H1 (cell line): ENCODE measurements at regions of chr19 and their contacts with region 1.

Region 1: GRCh38 chr19:10864538-10864899 is 6.8 kb upstream of the CARM1 start:
- DNase-seq: peak in 1 of 2 experiments; percentile 94
- H3K4me3 ChIP-seq: no peak overlapping the region
- H3K27ac ChIP-seq: no peak overlapping the region
- H3K4me1 ChIP-seq: no peaks in the 10 kb centered on the region; a peak in 1 of 7 replicates
- H3K27me3 ChIP-seq: no peaks in the 10 kb centered on the region; a peak in 1 of 7 replicates
- CTCF ChIP-seq: peak; percentile 87 to 96 (median 88)
- EP300 ChIP-seq: no peak
- POLR2A ChIP-seq: no peak
- RAD21 ChIP-seq: peak; percentile 58 to 59

Region 2: GRCh38 chr19:10828981-10829821 is 35.3 kb before region 1 on chr19:
- CTCF ChIA-PET with region 1: interaction called, 20 read pairs
- POLR2A ChIA-PET with region 1: no interaction called
- DNase-seq: no peak
- H3K4me3 ChIP-seq: no peak overlapping the region
- H3K27ac ChIP-seq: 0 out of 2 replicates have a peak overlapping the region, but pooled peaks have one; percentile 51
- H3K4me1 ChIP-seq: no peaks in the 10 kb centered on the region
- H3K27me3 ChIP-seq: no peaks in the 10 kb centered on the region
- CTCF ChIP-seq: peak; percentile 35 to 73 (median 38)
- EP300 ChIP-seq: no peak
- POLR2A ChIP-seq: no peak
- RAD21 ChIP-seq: peak in 1 of 2 experiments; percentile 18; a peak in 1 of 4 replicates

Region 3: GRCh38 chr19:10835754-10836477 is 28.6 kb before region 1 on chr19 and contains the start of gene TMED1:
- CTCF ChIA-PET with region 1: interaction called, 249 read pairs
- POLR2A ChIA-PET with region 1: interaction called, 21 read pairs
- DNase-seq: peak; percentile 99 to 100
- H3K4me3 ChIP-seq: peak within 1 kb of the TSS; percentile 58 to 92 (median 76)
- H3K27ac ChIP-seq: peak within 1 kb of the TSS; percentile 97
- H3K4me1 ChIP-seq: peaks cover 3 to 10% (median 6%) of the 10 kb centered on the region in 4 experiments
- H3K27me3 ChIP-seq: peaks cover 0 to 4% (median 0%) of the 10 kb centered on the region in 4 experiments; a peak in 1 of 7 replicates
- CTCF ChIP-seq: no peak
- EP300 ChIP-seq: no peak
- POLR2A ChIP-seq: peak; percentile 55 to 94
- RAD21 ChIP-seq: no peak
- total RNA-seq, gene TMED1: 26.2 and 26.9 TPM in 2 replicates

Region 4: GRCh38 chr19:10884274-10884673 is 19.8 kb after region 1 on chr19:
- CTCF ChIA-PET with region 1: interaction called, 103 read pairs
- POLR2A ChIA-PET with region 1: interaction called, 4 read pairs
- DNase-seq: no peak
- H3K4me3 ChIP-seq: no peak overlapping the region
- H3K27ac ChIP-seq: no peak overlapping the region
- H3K4me1 ChIP-seq: peaks cover 26 to 63% (median 53%) of the 10 kb centered on the region in 4 experiments
- H3K27me3 ChIP-seq: no peaks in the 10 kb centered on the region
- CTCF ChIP-seq: no peak
- EP300 ChIP-seq: no peak
- POLR2A ChIP-seq: no peak
- RAD21 ChIP-seq: no peak

Region 5: DNA sequence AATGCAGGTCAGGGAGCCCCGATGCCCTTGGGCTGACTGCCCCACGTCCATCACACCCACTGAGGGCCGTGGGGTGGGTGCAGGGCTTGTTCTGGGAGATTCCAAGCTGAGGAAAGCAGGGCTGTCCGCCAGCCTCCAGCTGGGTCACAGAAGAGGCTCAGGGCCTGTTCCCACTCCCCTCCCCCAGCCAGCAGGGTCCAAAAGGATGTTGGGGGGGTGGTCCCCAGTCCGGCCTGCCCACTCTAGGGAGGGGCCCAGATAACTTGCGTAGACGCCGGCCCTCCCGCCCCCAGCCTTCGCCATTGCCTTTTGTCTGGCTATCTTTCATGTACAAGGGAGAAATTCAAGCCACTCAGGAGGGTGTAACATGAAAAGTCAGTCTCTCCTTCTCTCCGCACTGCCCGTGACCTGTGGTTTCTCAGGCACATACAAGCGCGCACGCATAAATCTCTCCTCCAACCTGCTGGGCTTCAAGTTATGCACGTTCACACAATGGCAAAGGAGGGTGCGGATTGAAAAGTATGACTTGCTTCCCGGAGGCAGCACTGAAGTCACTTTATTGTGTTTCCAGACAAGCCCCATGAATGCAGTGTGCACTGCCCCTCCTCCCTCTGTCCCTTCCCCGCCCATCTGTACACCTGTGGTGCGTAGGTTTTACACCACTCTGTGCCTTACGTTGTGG is 27.0 kb after region 1 on chr19:
- CTCF ChIA-PET with region 1: interaction called, 103 read pairs
- POLR2A ChIA-PET with region 1: interaction called, 3 read pairs
- DNase-seq: no peak
- H3K4me3 ChIP-seq: no peak overlapping the region
- H3K27ac ChIP-seq: no peak overlapping the region; the same call in 1 of the 2 replicates
- H3K4me1 ChIP-seq: peaks cover 19 to 55% (median 45%) of the 10 kb centered on the region in 4 experiments
- H3K27me3 ChIP-seq: no peaks in the 10 kb centered on the region
- CTCF ChIP-seq: no peak
- EP300 ChIP-seq: no peak
- POLR2A ChIP-seq: no peak
- RAD21 ChIP-seq: no peak

Region 6: GRCh38 chr19:10899151-10899653 is 34.7 kb after region 1 on chr19:
- CTCF ChIA-PET with region 1: interaction called, 11 read pairs
- POLR2A ChIA-PET with region 1: no interaction called
- DNase-seq: no peak
- H3K4me3 ChIP-seq: no peak overlapping the region
- H3K27ac ChIP-seq: peak overlapping the region; percentile 45; the same call in 1 of the 2 replicates
- H3K4me1 ChIP-seq: peaks cover 5 to 10% (median 8%) of the 10 kb centered on the region in 4 experiments
- H3K27me3 ChIP-seq: no peaks in the 10 kb centered on the region
- CTCF ChIP-seq: no peak
- EP300 ChIP-seq: no peak
- POLR2A ChIP-seq: no peak
- RAD21 ChIP-seq: no peak